GM18951 (cell line): ENCODE measurements at regions of chr19 and their contacts with region 1.

Region 1: DNA sequence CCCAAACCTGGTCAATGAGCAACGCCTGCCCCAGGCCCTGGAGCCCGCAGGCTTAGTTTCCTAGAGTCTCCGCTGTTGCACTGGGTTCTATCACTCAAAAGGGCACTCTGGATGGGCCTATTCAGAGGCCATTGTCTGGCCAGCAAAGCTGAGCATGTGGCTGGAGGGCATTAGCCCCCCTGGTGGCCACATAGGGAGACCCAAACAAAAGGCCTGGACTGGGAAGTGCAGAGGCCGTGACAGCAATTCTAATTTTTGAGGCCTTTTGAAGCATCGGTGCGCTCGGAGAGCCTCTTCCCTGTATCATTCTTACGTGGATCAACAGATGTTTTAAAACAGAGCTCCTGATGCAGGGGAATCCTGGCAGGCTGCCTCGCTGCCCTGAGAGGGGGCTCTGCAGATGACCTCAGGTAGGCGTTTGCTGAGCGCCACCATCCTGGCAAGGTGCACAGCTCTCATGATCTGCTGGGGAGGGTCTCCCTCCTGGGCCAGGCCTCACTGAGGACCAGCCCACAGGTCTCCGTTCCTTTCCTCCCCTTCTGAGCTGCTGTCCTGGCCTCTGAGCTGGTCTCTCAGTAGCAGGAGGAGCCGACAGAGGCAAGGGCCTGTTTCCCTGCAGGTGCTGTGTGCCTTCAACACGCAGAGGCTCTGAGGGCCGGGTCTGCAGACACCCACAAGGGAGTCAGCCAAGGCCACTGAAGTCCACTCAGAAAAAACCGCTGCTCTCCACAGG is 190.5 kb downstream of the URI1 start:
- POLR2A ChIP-seq: no peak

Region 2: GRCh38 chr19:30229214-30230174 is 97.0 kb after region 1 on chr19:
- in situ Hi-C with region 1: no loop called
- POLR2A ChIP-seq: no peak

Region 3: GRCh38 chr19:30312582-30313352 is 180.3 kb after region 1 on chr19:
- in situ Hi-C with region 1: loop called (anchors 10 kb)
- POLR2A ChIP-seq: no peak